Common myeloid progenitor, CD34-positive (primary cell): ENCODE measurements at regions of chr11 and their contacts with region 1.

Region 1: DNA sequence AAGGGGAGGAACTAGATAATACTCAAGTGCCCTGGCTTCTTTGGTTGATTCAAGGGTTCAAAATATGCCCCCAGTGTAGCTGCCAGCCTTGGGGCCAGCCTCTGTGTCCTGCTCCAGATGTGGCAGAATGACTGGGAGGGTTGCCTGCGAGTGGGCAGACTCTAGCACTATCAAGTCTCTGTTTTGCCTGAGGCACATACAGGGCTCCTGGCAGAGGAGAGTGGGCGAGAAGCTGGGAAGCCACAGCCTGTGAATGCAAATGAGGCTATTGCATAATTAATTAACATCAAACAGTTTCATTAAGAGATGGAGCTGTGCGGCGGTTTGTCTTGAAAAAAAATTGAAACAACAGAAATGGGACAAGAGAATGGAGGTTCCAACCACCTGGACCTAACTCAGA is 50.8 kb downstream of the BUD13 start:
- DNase-seq: no peak
- H3K4me3 ChIP-seq: no peak overlapping the region
- H3K27ac ChIP-seq: no peak overlapping the region
- H3K4me1 ChIP-seq: no peaks in the 10 kb centered on the region
- H3K27me3 ChIP-seq: peaks cover 0 to 9% (median 0%) of the 10 kb centered on the region in 5 experiments

Region 2: GRCh38 chr11:116412118-116412889 is 309.7 kb before region 1 on chr11:
- CTCF ChIA-PET with region 1: no interaction called
- POLR2A ChIA-PET with region 1: no interaction called
- DNase-seq: no peak
- H3K4me3 ChIP-seq: no peak overlapping the region
- H3K27ac ChIP-seq: no peak overlapping the region
- H3K4me1 ChIP-seq: no peaks in the 10 kb centered on the region
- H3K27me3 ChIP-seq: peaks cover 0 to 11% (median 2%) of the 10 kb centered on the region in 5 experiments

Region 3: DNA sequence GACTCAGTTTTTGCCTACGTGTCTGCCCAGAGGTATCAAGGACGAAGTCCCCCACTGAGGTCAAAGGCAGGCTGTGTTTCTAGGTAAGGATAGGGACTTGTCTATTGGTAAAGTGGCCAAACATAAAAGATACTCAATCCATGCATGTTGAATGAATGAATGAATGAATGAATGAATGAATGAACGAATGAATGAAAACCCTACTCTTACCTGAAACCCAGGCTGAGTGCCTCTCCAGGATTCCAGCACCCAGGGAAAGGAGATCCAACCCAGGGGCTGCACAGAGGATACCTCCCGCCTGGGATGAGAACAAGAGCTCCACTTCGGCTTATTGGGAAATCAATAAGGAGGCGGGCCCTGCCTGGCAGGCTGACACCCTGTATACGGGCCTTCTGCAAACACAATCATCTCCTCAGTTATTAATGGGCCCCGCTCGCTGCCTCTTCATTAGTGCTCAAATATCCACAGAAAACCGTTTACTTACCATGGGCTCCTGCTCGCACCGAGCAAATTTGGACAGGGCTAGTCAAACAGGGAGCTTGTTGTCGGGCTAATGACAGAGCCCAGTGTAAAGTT is 126.6 kb before region 1 on chr11:
- CTCF ChIA-PET with region 1: no interaction called
- POLR2A ChIA-PET with region 1: no interaction called
- DNase-seq: no peak
- H3K4me3 ChIP-seq: no peak overlapping the region
- H3K27ac ChIP-seq: no peak overlapping the region
- H3K4me1 ChIP-seq: no peaks in the 10 kb centered on the region
- H3K27me3 ChIP-seq: peaks cover 0 to 11% (median 3%) of the 10 kb centered on the region in 5 experiments

Region 4: GRCh38 chr11:116732271-116733042 is 10.5 kb after region 1 on chr11:
- CTCF ChIA-PET with region 1: interaction called, 18 read pairs
- POLR2A ChIA-PET with region 1: no interaction called
- DNase-seq: peak; percentile 50 to 62 (median 56)
- H3K4me3 ChIP-seq: no peak overlapping the region
- H3K27ac ChIP-seq: no peak overlapping the region
- H3K4me1 ChIP-seq: peaks cover 0 to 22% (median 15%) of the 10 kb centered on the region in 4 experiments
- H3K27me3 ChIP-seq: peaks cover 0 to 4% (median 2%) of the 10 kb centered on the region in 5 experiments

Region 5: DNA sequence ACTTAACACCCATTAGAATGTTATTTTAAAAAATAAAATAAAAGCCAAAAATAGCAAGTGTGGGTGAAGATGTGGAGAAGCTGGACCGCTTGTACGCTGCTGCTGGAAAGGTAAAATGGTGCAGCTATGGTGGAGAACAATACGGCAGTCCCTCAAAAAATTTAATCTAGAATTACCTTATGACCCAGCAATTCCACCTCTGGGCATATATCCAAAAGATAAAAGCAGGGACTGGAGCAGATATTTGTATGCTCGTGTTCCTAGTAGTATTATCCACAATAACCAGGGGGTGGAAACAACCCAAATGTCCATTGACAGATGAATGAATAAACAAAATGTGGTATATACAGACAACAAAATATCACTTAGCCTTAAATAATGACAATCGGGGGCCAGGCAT is 75.8 kb after region 1 on chr11:
- CTCF ChIA-PET with region 1: no interaction called
- POLR2A ChIA-PET with region 1: no interaction called
- DNase-seq: no peak
- H3K4me3 ChIP-seq: no peak overlapping the region
- H3K27ac ChIP-seq: no peak overlapping the region
- H3K4me1 ChIP-seq: no peaks in the 10 kb centered on the region
- H3K27me3 ChIP-seq: no peaks in the 10 kb centered on the region

Region 6: DNA sequence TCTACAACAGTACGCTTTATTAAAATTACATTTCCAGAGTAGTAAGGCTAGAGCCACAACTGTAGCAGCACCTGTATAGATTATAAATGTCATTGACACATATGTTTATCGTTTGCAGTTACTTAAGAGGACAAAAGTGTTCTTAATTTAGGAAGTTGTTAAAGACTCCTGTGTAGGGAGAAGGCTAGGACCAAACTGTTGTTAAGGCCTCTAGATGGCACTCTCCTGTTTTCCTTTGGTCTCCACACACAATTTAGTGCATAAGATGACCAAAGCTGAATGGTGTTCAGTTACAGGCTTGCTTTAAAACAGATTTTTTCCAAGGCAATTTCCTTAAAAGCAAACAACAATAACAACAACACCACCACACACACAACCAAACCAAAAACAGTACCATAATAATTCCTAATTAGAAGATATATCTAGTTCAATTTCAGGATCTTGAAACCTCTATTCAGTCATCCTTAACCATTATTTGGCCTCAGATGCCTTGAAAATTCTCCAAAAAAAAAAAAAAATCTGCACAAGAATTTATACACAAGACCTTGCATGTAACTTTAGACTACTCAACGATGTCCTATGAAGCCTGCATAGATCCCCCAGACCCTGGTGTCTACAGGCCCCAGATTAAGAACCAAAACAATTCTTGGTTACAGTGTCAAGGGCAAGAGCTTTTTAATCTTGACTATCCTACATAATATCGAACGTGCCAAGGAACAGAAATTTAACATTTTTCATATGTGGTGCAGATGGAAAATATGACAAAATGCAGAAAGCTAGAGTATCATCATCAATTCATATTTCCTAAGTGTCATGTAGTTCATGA is 158.0 kb after region 1 on chr11:
- CTCF ChIA-PET with region 1: no interaction called
- POLR2A ChIA-PET with region 1: no interaction called
- DNase-seq: peak; percentile 72 to 83 (median 80)
- H3K4me3 ChIP-seq: no peak overlapping the region
- H3K27ac ChIP-seq: no peak overlapping the region
- H3K4me1 ChIP-seq: peaks cover 0 to 19% (median 5%) of the 10 kb centered on the region in 4 experiments
- H3K27me3 ChIP-seq: no peaks in the 10 kb centered on the region